Motor neuron (in vitro differentiated cells): ENCODE measurements at regions of chr19 and their contacts with region 1.

Region 1: DNA sequence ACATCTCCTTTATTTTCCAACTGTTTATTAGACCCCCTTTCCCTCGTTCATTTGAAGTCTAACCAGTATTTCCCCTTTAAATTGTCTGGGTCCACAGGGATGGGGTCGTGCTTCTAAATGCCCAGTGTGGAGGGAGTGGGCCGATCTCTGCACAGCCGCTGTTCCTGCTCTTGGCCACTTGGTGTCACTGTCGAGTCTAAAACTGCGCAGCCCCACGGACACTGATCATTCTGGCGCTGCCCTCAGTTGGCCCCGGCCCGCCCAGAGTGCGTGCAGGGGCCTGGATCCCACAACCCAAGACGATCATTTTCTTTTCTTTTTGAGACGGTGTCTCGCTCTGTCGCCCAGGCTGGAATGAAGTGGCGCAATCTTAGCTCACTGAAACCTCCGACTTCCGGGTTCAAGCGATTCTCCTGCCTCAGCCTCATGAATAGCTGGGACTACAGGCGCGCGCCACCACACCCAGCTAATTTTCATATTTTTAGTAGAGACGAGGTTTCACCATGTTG is 12.0 kb downstream of the WDR88 start:
- ATAC-seq: peak; percentile 98 to 100 (median 99)
- H3K4me3 ChIP-seq: no peak overlapping the region
- H3K27ac ChIP-seq: no peak overlapping the region
- H3K4me1 ChIP-seq: no peaks in the 10 kb centered on the region

Region 2: DNA sequence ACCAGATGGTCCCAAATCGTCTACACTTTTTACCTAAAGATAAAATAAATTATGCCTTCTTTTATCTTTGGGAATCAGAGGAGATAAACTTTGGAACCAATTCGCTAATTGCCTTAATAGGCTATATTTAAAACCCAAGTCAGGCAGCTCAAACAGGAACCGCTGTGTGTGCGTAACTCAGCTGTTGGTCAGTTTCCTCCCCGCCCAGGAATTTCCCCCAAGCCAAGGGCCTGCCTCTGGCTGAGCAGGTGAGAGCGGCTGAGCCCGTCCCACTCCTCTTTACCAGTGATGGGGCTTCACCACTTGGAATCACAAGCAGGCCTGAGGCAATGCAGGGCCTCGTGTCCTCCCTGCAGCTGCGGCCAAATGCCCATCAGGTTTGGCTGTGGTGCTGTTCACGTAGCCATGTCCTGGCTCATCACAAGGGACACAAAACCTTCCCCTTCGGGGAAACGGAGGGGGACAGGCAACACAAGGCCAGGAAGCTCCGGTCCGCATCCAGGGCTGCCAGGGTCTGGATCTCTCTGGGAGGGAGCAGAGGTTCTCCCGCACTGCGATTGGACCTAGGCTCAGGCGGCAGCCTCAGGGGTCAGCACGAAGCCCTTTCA is 273.9 kb before region 1 on chr19:
- in situ Hi-C with region 1: no loop called
- ATAC-seq: no peak
- H3K4me3 ChIP-seq: no peak overlapping the region
- H3K27ac ChIP-seq: no peak overlapping the region
- H3K4me1 ChIP-seq: no peaks in the 10 kb centered on the region

Region 3: DNA sequence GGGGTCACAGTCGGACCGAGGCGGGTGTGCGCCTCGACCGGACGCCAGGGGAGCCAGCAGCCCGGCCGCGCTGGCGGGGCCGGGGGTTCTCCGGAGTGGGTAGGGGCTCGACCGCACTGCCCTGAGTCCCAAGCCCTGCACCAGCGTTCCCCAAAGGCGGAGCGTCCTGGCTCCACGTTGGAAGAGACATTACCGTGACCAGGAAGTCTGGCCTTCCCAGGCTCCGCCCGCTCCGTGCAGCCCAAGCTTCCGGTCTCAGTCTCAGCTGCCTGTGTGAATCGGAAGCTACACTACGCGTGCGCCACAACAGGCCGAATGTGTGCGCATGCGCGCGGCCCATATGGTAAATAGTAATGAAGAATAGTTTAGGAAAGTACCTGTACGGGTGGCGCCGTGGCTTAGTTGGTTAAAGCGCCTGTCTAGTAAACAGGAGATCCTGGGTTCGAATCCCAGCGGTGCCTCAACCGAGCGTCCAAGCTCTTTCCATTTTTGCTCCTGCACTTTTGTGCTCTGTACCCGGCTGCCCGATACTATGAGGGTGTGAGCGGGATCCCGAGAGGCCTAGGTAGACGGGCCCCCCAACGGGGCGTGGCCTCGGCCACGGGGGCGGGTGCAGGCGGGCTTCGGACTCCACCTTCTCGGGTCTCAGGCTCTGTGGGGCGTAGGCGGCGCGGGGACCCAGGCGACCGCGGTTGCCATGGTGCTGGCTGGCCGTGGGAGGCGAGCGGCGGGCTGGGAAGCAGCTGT is 32.9 kb after region 1 on chr19:
- in situ Hi-C with region 1: loop called in 1 of 9 experiments (anchors 5 kb)
- ATAC-seq: peak; percentile 80 to 87 (median 82)
- H3K4me3 ChIP-seq: peak overlapping the region; percentile 52 to 72 (median 61)
- H3K27ac ChIP-seq: peak overlapping the region; percentile 94 to 98
- H3K4me1 ChIP-seq: peaks cover 12% of the 10 kb centered on the region in 2 donors

Region 4: GRCh38 chr19:33248954-33249613 is 105.1 kb after region 1 on chr19:
- in situ Hi-C with region 1: no loop called
- ATAC-seq: peak in 6 of 8 experiments; percentile 38 to 66 (median 59)
- H3K4me3 ChIP-seq: no peak overlapping the region
- H3K27ac ChIP-seq: peak overlapping the region in 1 of 2 donors; percentile 56
- H3K4me1 ChIP-seq: peaks cover 5 to 21% of the 10 kb centered on the region in 2 donors